HAP-1 (cell line): ENCODE measurements at regions of chr11 and their contacts with region 1.

Region 1: DNA sequence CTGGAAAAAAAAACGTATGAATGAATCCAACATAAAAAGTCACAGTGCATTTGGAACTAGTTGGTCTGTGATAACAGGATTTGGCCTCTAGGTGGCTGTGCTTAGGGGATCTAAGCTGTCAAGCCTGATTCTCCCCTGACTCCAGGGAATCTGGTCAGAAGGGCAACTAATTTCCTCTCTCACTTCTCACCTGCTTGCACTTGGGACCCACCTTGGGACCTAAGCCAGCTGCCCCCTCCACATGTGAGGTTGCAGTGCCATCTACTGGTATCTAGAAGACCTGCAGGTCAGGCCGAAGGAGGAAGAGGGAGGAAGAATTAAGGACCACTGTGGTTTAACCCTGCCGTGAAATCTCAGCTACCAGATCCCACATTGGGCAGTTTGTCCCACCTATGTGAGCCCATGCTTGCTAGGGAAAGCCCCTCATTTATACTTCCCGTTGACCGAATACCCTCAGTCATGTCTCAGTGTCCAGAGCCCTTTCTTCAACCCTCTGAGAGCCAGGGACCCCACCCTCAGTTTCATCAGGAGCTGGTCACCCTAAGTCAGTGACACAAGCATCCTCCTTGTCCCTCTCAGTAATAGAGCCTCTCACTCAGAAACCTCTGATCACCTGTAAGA is 33.2 kb upstream of the CAVIN3 start:
- DNase-seq: peak; percentile 55 to 74
- H3K4me3 ChIP-seq: no peak overlapping the region
- H3K4me1 ChIP-seq: no peaks in the 10 kb centered on the region; the same call in 1 of the 2 replicates
- H3K27me3 ChIP-seq: peaks cover 4% of the 10 kb centered on the region; the same call in 1 of the 2 replicates

Region 2: GRCh38 chr11:5420993-5421392 is 932.5 kb before region 1 on chr11:
- in situ Hi-C with region 1: no loop called
- DNase-seq: no peak
- H3K4me3 ChIP-seq: no peak overlapping the region
- H3K4me1 ChIP-seq: no peaks in the 10 kb centered on the region
- H3K27me3 ChIP-seq: no peaks in the 10 kb centered on the region

Region 3: DNA sequence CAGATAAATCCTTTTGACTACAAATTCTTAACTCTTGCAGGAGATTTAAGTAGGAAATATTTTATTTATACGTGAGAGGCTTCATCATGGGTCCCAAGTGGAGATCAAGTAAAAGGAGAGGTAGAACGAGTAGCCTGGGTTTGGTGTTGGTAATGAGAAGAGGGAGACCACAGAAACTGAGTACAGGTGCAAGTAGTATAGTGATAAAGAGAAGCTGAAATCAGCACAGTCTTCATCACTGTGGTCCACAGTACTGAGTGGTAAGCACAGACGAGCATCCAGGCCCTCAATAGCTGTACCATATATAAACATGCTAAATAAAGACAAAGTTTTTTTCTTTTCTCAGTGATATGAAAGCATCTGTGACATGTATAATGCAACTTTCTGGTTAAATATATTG is 466.3 kb before region 1 on chr11:
- in situ Hi-C with region 1: no loop called
- DNase-seq: no peak
- H3K4me3 ChIP-seq: no peak overlapping the region
- H3K4me1 ChIP-seq: no peaks in the 10 kb centered on the region
- H3K27me3 ChIP-seq: no peaks in the 10 kb centered on the region

Region 4: GRCh38 chr11:6027501-6027900 is 326.0 kb before region 1 on chr11:
- in situ Hi-C with region 1: loop called (anchors 5 kb)
- DNase-seq: no peak
- H3K4me3 ChIP-seq: no peak overlapping the region
- H3K4me1 ChIP-seq: no peaks in the 10 kb centered on the region
- H3K27me3 ChIP-seq: peaks cover 4% of the 10 kb centered on the region; the same call in 1 of the 2 replicates